B cell (primary cell): ENCODE measurements at regions of chr5 and their contacts with region 1.

Region 1: DNA sequence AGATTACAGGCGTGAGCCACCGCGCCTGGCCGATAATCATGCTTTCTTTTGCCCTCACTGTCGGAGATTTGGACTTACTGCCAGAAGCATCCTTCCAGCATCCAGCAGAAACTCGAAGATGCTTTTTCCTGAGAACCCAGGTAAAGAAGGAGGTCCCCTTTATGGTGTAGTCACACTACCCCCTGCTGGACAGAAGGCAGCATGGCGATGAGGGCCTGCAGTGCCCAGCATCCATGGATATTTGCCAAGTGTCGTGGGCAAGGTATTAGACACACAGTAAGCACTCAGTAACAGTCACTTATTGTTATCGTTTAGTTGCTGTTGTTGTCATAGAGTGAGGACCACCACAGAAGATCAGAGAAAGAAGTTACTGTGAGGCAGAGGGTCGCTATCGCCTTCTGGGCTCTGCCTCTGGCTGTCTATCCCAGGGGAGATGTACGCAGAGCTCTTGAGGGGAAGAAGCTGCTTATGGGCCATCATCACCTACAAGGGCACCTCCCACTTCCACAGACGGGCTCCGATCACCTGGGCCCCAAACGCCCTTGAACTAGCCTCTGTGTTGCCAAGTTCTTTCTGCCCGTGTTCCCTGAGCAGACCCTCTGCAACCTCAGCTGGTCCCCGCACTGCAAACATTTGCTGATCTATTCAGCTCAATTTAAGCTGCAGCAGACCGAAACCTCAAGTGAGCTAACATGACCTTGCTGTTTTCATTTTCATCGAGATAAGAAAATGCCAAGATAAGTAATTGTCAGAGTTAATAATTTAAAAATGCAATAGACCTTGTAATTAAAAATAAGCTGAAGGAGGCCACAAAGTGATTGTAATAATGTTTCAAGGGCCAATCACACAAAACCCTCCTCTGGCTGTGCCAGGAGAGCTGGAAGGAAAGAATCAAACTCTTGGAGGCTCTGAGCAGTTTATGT is 23.9 kb downstream of the C5orf15 start:
- DNase-seq: peak; percentile 77
- ATAC-seq: peak; percentile 88
- H3K4me3 ChIP-seq: no peak overlapping the region
- H3K4me3 Mint-ChIP-seq: no peak overlapping the region
- H3K27ac ChIP-seq: no peak overlapping the region
- H3K27ac Mint-ChIP-seq: no peak overlapping the region
- H3K4me1 ChIP-seq: peaks cover 31 to 47% of the 10 kb centered on the region in 2 donors
- H3K4me1 Mint-ChIP-seq: peaks cover 36% of the 10 kb centered on the region
- H3K27me3 ChIP-seq: no peaks in the 10 kb centered on the region
- H3K27me3 Mint-ChIP-seq: no peaks in the 10 kb centered on the region
- CTCF ChIP-seq: peak; percentile 88

Region 2: DNA sequence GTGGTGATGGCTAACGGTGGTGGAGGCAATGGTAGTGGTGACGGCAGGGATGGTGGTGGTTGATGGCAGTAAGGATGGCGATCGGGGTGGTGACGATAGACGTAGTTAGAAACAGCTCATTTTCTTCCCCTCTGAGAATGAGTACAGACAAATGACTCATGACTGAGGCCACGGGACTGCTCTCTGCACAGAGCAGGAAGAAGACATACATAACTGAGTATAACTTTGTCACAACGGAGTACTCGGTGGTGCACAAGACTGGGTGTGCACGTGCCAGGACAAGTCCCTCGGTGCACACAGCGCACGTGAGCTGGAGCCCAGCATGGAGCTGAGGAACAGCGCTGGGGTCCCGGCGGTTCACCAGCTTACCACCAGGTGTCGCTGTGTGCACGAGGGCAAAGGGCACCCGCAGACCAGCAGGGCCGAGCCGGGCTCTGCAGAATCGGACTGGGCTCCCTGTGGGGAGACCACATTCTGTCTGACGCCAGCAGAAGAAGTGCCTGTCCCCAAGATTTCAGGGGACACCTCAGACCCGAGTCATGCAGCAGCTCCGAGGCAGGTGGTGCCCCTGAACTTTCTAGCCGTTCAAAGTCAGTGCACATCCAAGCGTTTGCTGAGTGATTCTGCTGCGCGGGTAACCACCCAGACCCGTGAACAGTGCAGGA is 520.8 kb before region 1 on chr5:
- CTCF ChIA-PET with region 1: interaction called, 87 read pairs
- POLR2A ChIA-PET with region 1: interaction called, 7 read pairs
- intact Hi-C with region 1: loop called (anchors 1 kb)
- DNase-seq: peak; percentile 80
- ATAC-seq: peak; percentile 79
- H3K4me3 ChIP-seq: no peak overlapping the region
- H3K4me3 Mint-ChIP-seq: no peak overlapping the region
- H3K27ac ChIP-seq: no peak overlapping the region
- H3K27ac Mint-ChIP-seq: no peak overlapping the region
- H3K4me1 ChIP-seq: peaks cover 0 to 13% of the 10 kb centered on the region in 2 donors
- H3K4me1 Mint-ChIP-seq: peaks cover 7% of the 10 kb centered on the region
- H3K27me3 ChIP-seq: no peaks in the 10 kb centered on the region
- H3K27me3 Mint-ChIP-seq: peaks cover 28% of the 10 kb centered on the region
- CTCF ChIP-seq: peak; percentile 98

Region 3: DNA sequence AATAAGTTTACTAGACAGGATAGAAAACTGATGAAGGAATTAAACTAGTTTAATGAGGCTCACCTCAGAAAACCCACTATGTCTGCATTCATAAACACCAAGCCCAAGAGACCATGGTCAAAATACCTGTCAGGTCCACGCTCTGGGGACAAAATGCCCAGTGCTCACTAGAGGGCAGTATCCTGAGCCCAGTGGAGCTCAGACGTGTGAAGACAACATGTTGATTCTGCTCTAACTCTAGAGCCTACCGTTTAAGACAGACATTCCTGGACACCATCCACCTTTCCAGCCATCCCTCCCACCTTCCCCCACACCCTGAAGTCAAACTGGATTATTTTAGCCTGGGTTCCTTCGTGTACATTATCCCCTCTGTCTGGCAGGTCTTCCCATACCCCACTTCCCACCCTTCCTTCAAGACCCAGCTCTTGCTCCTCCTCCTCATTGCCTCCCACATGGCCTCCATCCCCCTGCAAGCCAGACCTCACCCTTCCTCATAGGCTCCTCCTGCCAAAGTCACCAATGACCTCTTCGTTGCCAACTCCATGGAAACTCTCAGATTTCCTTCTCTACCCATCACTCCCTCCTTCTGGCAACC is 189.9 kb before region 1 on chr5:
- CTCF ChIA-PET with region 1: interaction called, 10 read pairs
- POLR2A ChIA-PET with region 1: no interaction called
- intact Hi-C with region 1: no loop called
- DNase-seq: peak; percentile 54
- ATAC-seq: peak; percentile 43
- H3K4me3 ChIP-seq: no peak overlapping the region
- H3K4me3 Mint-ChIP-seq: no peak overlapping the region
- H3K27ac ChIP-seq: no peak overlapping the region
- H3K27ac Mint-ChIP-seq: peak overlapping the region; percentile 66
- H3K4me1 ChIP-seq: no peaks in the 10 kb centered on the region
- H3K4me1 Mint-ChIP-seq: peaks cover 5% of the 10 kb centered on the region
- H3K27me3 ChIP-seq: peaks cover 0 to 4% (median 1%) of the 10 kb centered on the region in 4 experiments
- H3K27me3 Mint-ChIP-seq: peaks cover 21% of the 10 kb centered on the region
- CTCF ChIP-seq: peak; percentile 59

Region 4: GRCh38 chr5:133848341-133848811 is 96.1 kb before region 1 on chr5:
- CTCF ChIA-PET with region 1: no interaction called
- POLR2A ChIA-PET with region 1: no interaction called
- intact Hi-C with region 1: no loop called
- DNase-seq: no peak
- ATAC-seq: no peak
- H3K4me3 ChIP-seq: no peak overlapping the region
- H3K4me3 Mint-ChIP-seq: peak overlapping the region; percentile 61
- H3K27ac ChIP-seq: no peak overlapping the region
- H3K27ac Mint-ChIP-seq: no peak overlapping the region
- H3K4me1 ChIP-seq: peaks cover 43 to 45% of the 10 kb centered on the region in 2 donors
- H3K4me1 Mint-ChIP-seq: peaks cover 33% of the 10 kb centered on the region
- H3K27me3 ChIP-seq: no peaks in the 10 kb centered on the region
- H3K27me3 Mint-ChIP-seq: no peaks in the 10 kb centered on the region
- CTCF ChIP-seq: no peak

Region 5: GRCh38 chr5:133930061-133930812 is 14.3 kb before region 1 on chr5:
- CTCF ChIA-PET with region 1: interaction called, 23 read pairs
- POLR2A ChIA-PET with region 1: interaction called, 8 read pairs
- intact Hi-C with region 1: loop called (anchors 1 kb)
- DNase-seq: peak; percentile 80
- ATAC-seq: peak; percentile 9
- H3K4me3 ChIP-seq: peak overlapping the region in 3 of 5 experiments; percentile 1 to 50 (median 33)
- H3K4me3 Mint-ChIP-seq: peak overlapping the region; percentile 79
- H3K27ac ChIP-seq: peak overlapping the region; percentile 93 to 96
- H3K27ac Mint-ChIP-seq: peak overlapping the region; percentile 95
- H3K4me1 ChIP-seq: peaks cover 86 to 90% of the 10 kb centered on the region in 2 donors
- H3K4me1 Mint-ChIP-seq: peaks cover 85% of the 10 kb centered on the region
- H3K27me3 ChIP-seq: no peaks in the 10 kb centered on the region
- H3K27me3 Mint-ChIP-seq: no peaks in the 10 kb centered on the region
- CTCF ChIP-seq: no peak

Region 6: GRCh38 chr5:133990396-133990795 is 45.9 kb after region 1 on chr5:
- CTCF ChIA-PET with region 1: no interaction called
- POLR2A ChIA-PET with region 1: no interaction called
- intact Hi-C with region 1: no loop called
- DNase-seq: no peak
- ATAC-seq: no peak
- H3K4me3 ChIP-seq: no peak overlapping the region
- H3K4me3 Mint-ChIP-seq: no peak overlapping the region
- H3K27ac ChIP-seq: no peak overlapping the region
- H3K27ac Mint-ChIP-seq: no peak overlapping the region
- H3K4me1 ChIP-seq: peaks cover 5 to 13% of the 10 kb centered on the region in 2 donors
- H3K4me1 Mint-ChIP-seq: peaks cover 42% of the 10 kb centered on the region
- H3K27me3 ChIP-seq: no peaks in the 10 kb centered on the region
- H3K27me3 Mint-ChIP-seq: no peaks in the 10 kb centered on the region
- CTCF ChIP-seq: no peak

Region 7: DNA sequence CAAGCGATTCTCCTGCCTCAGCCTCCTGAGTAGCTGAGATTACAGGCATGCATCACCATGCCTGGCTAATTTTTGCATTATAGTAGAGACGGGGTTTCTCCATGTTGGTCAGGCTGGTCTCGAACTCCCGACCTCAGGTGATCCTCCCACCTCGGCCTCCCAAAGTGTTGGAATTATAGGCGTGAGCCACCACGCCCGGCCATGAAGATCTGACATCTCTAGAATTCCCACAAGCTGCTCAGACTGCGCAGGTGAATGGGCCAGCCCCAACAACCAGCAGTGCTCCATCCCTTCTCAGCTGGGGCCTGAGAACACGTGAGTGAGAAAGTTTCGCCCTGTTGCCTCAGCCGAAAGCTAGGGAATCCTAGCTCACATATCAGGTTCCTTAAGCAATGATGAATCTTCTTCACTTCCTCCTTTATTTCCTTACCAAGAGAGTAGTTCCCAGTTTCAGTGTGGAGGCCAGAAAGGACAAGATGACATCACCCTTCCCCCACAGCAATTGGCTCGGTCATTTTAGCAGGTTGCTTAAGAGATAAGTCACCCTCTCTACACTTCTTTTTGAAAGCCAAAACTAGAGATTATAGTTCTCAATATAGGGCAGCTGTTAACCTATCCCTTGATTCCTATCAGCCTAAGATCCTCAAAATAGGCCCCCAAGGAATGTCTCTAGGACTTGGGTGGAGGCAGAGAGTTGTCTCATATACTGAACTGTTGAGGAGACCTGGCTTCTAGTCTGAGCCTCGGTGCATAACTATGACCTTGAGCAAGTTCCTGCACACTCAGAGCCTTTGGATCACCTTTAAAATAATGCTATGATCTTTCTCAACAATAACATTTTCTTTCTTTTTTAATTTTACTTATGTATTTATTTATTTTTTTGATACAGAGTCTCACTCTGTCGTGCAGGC is 305.2 kb after region 1 on chr5:
- CTCF ChIA-PET with region 1: no interaction called
- POLR2A ChIA-PET with region 1: no interaction called
- intact Hi-C with region 1: no loop called
- DNase-seq: no peak
- ATAC-seq: no peak
- H3K4me3 ChIP-seq: no peak overlapping the region
- H3K4me3 Mint-ChIP-seq: no peak overlapping the region
- H3K27ac ChIP-seq: no peak overlapping the region
- H3K27ac Mint-ChIP-seq: no peak overlapping the region
- H3K4me1 ChIP-seq: no peaks in the 10 kb centered on the region
- H3K4me1 Mint-ChIP-seq: no peaks in the 10 kb centered on the region
- H3K27me3 ChIP-seq: no peaks in the 10 kb centered on the region
- H3K27me3 Mint-ChIP-seq: peaks cover 16% of the 10 kb centered on the region
- CTCF ChIP-seq: no peak